HepG2 (cell line): ENCODE measurements at regions of chr5 and their contacts with region 1.

Region 1: GRCh38 chr5:177086924-177087706 is 400 bp downstream of the FGFR4 start:
- DNase-seq: peak; percentile 96
- ATAC-seq: peak; percentile 89
- H3K4me3 ChIP-seq: peak overlapping the region; percentile 91 to 99 (median 93)
- H3K27ac ChIP-seq: peak overlapping the region; percentile 100
- H3K4me1 ChIP-seq: peaks cover 68% of the 10 kb centered on the region
- H3K27me3 ChIP-seq: no peaks in the 10 kb centered on the region; a peak in 1 of 5 replicates
- CTCF ChIP-seq: peak; percentile 95
- EP300 ChIP-seq: peak; percentile 83 to 90; a peak in 2 of 4 replicates
- POLR2A ChIP-seq: peak in 1 of 2 experiments; percentile 89; a peak in 2 of 4 replicates
- RAD21 ChIP-seq: peak; percentile 94

Region 2: GRCh38 chr5:176837707-176838115 is 249.4 kb before region 1 on chr5:
- CTCF ChIA-PET with region 1: no interaction called
- POLR2A ChIA-PET with region 1: no interaction called
- in situ Hi-C with region 1: no loop called
- intact Hi-C with region 1: no loop called
- DNase-seq: peak; percentile 78
- ATAC-seq: peak; percentile 96
- H3K4me3 ChIP-seq: no peak overlapping the region
- H3K27ac ChIP-seq: no peak overlapping the region
- H3K4me1 ChIP-seq: no peaks in the 10 kb centered on the region
- H3K27me3 ChIP-seq: peaks cover 1 to 19% of the 10 kb centered on the region in 2 experiments
- CTCF ChIP-seq: peak; percentile 27; the same call in 1 of the 2 replicates
- EP300 ChIP-seq: no peak
- POLR2A ChIP-seq: no peak
- RAD21 ChIP-seq: peak; percentile 86

Region 3: DNA sequence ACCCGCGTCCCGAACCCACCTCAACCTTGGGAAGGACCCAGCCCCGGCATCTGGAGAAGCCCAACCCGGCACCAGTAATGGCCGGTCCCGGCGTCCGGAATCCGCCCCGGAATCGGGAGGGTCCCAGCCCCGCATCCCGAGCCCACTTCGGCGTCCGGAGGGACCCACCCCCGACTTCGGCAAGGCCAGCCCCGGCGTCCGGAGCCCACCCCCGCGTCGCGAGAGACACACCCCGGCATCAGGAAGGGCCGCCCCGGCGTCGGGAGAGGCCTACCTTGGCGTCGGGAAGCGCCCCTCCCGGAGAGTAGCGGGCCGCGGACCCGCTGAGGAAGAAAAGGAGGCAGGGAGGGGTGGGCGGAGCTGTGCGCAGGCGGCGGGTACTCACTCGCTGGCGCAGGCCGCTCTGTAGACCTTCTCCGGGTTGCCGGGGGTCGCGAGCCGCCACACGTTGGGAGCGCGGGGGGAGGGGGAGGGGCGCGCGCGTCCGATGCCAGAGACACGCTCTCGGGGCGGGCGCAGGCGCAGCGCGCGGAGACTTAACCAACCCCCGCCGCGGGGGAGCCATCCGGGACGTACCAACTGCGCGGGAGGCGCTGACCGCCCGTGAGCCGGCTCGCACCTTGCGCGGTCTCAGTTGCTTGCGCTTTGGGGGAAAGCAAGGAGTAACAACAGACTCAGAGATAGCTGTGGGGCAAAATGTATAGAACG is 80.7 kb before region 1 on chr5 and contains the start of gene UIMC1:
- CTCF ChIA-PET with region 1: no interaction called
- POLR2A ChIA-PET with region 1: interaction called, 13 read pairs
- in situ Hi-C with region 1: no loop called
- intact Hi-C with region 1: no loop called
- DNase-seq: peak; percentile 82
- ATAC-seq: peak; percentile 85
- H3K4me3 ChIP-seq: peak within 1 kb of the TSS; percentile 97 to 99 (median 99)
- H3K27ac ChIP-seq: peak within 1 kb of the TSS; percentile 96
- H3K4me1 ChIP-seq: peaks cover 20% of the 10 kb centered on the region
- H3K27me3 ChIP-seq: no peaks in the 10 kb centered on the region
- CTCF ChIP-seq: no peak
- EP300 ChIP-seq: no peak
- POLR2A ChIP-seq: peak; percentile 63 to 75
- RAD21 ChIP-seq: 0 out of 2 replicates have a peak, but pooled peaks have one; percentile 14
- total RNA-seq, gene UIMC1: 32.7 and 37.5 TPM in 2 replicates

Region 4: DNA sequence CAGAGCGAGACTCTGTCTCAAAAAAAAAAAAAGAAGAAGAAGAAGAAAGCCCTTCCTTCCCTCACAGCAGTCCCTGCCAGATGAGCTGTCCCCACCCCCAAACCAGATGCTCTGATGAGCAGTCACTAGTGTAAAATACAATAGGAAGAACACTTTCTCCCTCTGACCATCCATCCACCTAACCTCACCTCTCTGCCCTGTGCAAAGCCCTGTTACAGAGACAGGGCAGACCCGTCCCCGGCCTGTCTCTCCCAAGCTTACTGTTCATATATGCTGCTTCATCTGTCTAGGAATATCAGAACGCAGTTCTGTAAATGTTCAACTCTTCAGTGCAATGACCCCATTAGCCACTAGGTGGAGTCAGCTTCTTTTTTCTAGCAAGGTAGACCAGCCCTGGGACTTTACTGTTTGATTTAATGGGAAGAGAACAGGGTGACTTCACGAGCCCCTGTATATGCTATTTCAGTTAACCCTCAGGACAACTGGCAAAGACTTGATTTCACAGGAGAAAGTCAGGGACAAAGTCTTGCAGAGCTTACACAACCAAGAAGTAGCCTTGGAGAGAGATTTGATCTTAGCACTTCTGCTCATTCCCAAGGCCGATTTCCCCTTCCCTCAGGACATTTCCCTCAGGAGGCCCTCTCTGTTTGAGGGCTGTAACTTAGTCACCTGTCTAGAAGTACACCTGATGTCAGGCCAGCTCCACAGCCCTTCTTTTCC is 15.3 kb before region 1 on chr5:
- CTCF ChIA-PET with region 1: no interaction called
- POLR2A ChIA-PET with region 1: interaction called, 119 read pairs
- in situ Hi-C with region 1: no loop called
- intact Hi-C with region 1: no loop called
- DNase-seq: peak; percentile 86
- ATAC-seq: peak; percentile 91
- H3K4me3 ChIP-seq: no peak overlapping the region
- H3K27ac ChIP-seq: no peak overlapping the region
- H3K4me1 ChIP-seq: peaks cover 16% of the 10 kb centered on the region
- H3K27me3 ChIP-seq: no peaks in the 10 kb centered on the region
- CTCF ChIP-seq: peak; percentile 87
- EP300 ChIP-seq: no peak
- POLR2A ChIP-seq: no peak
- RAD21 ChIP-seq: peak; percentile 73

Region 5: GRCh38 chr5:177113566-177114424 is 26.7 kb after region 1 on chr5:
- CTCF ChIA-PET with region 1: interaction called, 10 read pairs
- POLR2A ChIA-PET with region 1: interaction called, 293 read pairs
- in situ Hi-C with region 1: no loop called
- intact Hi-C with region 1: no loop called
- DNase-seq: peak; percentile 62
- ATAC-seq: peak; percentile 52
- H3K4me3 ChIP-seq: peak overlapping the region in 1 of 3 experiments; percentile 58; a peak in 1 of 6 replicates
- H3K27ac ChIP-seq: no peak overlapping the region
- H3K4me1 ChIP-seq: peaks cover 57% of the 10 kb centered on the region
- H3K27me3 ChIP-seq: no peaks in the 10 kb centered on the region
- CTCF ChIP-seq: peak; percentile 95
- EP300 ChIP-seq: no peak
- POLR2A ChIP-seq: no peak
- RAD21 ChIP-seq: peak; percentile 85